ENCODE measurements at regions of chr19 and their contacts with region 1.

Region 1: GRCh38 chr19:35269421-35270117 is 807 bp downstream of the USF2 start:
- DNase-seq: peak; percentile 81
- ATAC-seq: peak; percentile 70
- H3K4me3 Mint-ChIP-seq: peak overlapping the region; percentile 66
- H3K27ac Mint-ChIP-seq: peak overlapping the region; percentile 12
- H3K4me1 Mint-ChIP-seq: peaks cover 61% of the 10 kb centered on the region
- H3K27me3 Mint-ChIP-seq: no peaks in the 10 kb centered on the region
- CTCF ChIP-seq: no peak

Region 2: GRCh38 chr19:35066691-35067563 is 202.6 kb before region 1 on chr19:
- CTCF ChIA-PET with region 1: no interaction called
- POLR2A ChIA-PET with region 1: interaction called, 4 read pairs
- intact Hi-C with region 1: loop called (anchors 5 kb)
- DNase-seq: peak; percentile 88
- ATAC-seq: peak; percentile 91
- H3K4me3 Mint-ChIP-seq: peak overlapping the region; percentile 24
- H3K27ac Mint-ChIP-seq: peak overlapping the region; percentile 41
- H3K4me1 Mint-ChIP-seq: peaks cover 30% of the 10 kb centered on the region
- H3K27me3 Mint-ChIP-seq: no peaks in the 10 kb centered on the region
- CTCF ChIP-seq: no peak

Region 3: DNA sequence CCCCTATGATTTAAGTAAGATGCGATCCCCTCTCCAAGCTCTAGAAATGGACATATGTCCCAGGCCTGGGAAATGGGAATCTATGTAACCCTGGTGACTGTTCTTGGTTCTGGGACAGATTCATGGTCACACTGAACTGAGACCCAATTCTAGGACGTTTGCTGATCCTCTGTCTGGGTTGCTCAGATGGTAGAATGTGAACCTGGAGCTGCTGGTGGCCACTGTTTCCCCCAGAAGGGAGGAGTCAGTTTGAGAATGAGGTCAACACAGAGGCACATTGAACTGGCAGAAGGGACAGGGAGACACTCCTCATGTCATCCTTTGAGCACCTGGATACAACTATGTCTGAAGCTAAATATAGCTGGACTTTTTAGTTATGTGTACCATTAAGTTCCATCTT is 70.1 kb before region 1 on chr19:
- CTCF ChIA-PET with region 1: no interaction called
- POLR2A ChIA-PET with region 1: no interaction called
- intact Hi-C with region 1: no loop called
- DNase-seq: no peak
- ATAC-seq: no peak
- H3K4me3 Mint-ChIP-seq: no peak overlapping the region
- H3K27ac Mint-ChIP-seq: no peak overlapping the region
- H3K4me1 Mint-ChIP-seq: peaks cover 29% of the 10 kb centered on the region
- H3K27me3 Mint-ChIP-seq: peaks cover 1% of the 10 kb centered on the region
- CTCF ChIP-seq: no peak

Region 4: GRCh38 chr19:35247526-35248306 is 21.9 kb before region 1 on chr19:
- CTCF ChIA-PET with region 1: no interaction called
- POLR2A ChIA-PET with region 1: interaction called, 15 read pairs
- intact Hi-C with region 1: loop called (anchors 1 kb)
- DNase-seq: peak; percentile 59
- ATAC-seq: peak; percentile 52
- H3K4me3 Mint-ChIP-seq: peak overlapping the region; percentile 91
- H3K27ac Mint-ChIP-seq: peak overlapping the region; percentile 93
- H3K4me1 Mint-ChIP-seq: peaks cover 31% of the 10 kb centered on the region
- H3K27me3 Mint-ChIP-seq: peaks cover 2% of the 10 kb centered on the region
- CTCF ChIP-seq: no peak

Region 5: GRCh38 chr19:35279985-35280821 is 10.6 kb after region 1 on chr19:
- CTCF ChIA-PET with region 1: no interaction called
- POLR2A ChIA-PET with region 1: interaction called, 15 read pairs
- intact Hi-C with region 1: no loop called
- DNase-seq: no peak
- ATAC-seq: peak; percentile 33
- H3K4me3 Mint-ChIP-seq: no peak overlapping the region
- H3K27ac Mint-ChIP-seq: peak overlapping the region; percentile 75
- H3K4me1 Mint-ChIP-seq: peaks cover 45% of the 10 kb centered on the region
- H3K27me3 Mint-ChIP-seq: no peaks in the 10 kb centered on the region
- CTCF ChIP-seq: no peak

Region 6: GRCh38 chr19:35462476-35462953 is 192.9 kb after region 1 on chr19:
- CTCF ChIA-PET with region 1: no interaction called
- POLR2A ChIA-PET with region 1: interaction called, 5 read pairs
- intact Hi-C with region 1: loop called (anchors 1 kb)
- DNase-seq: peak; percentile 35
- ATAC-seq: peak; percentile 76
- H3K4me3 Mint-ChIP-seq: peak overlapping the region; percentile 76
- H3K27ac Mint-ChIP-seq: peak overlapping the region; percentile 85
- H3K4me1 Mint-ChIP-seq: peaks cover 64% of the 10 kb centered on the region
- H3K27me3 Mint-ChIP-seq: no peaks in the 10 kb centered on the region
- CTCF ChIP-seq: no peak

Region 7: GRCh38 chr19:35495107-35496064 is 225.8 kb after region 1 on chr19:
- CTCF ChIA-PET with region 1: interaction called, 9 read pairs
- POLR2A ChIA-PET with region 1: interaction called, 5 read pairs
- intact Hi-C with region 1: loop called (anchors 1 kb)
- DNase-seq: peak; percentile 62
- ATAC-seq: peak; percentile 100
- H3K4me3 Mint-ChIP-seq: no peak overlapping the region
- H3K27ac Mint-ChIP-seq: no peak overlapping the region
- H3K4me1 Mint-ChIP-seq: peaks cover 8% of the 10 kb centered on the region
- H3K27me3 Mint-ChIP-seq: peaks cover 5% of the 10 kb centered on the region
- CTCF ChIP-seq: peak; percentile 67

Measured in activated B cell treated with CpG ODN at 0.5 μM for 24 hours (primary cell).